Activated CD8-positive, alpha-beta T cell treated with anti-CD3 and anti-CD28 coated beads, Interleukin-2, amount 10 ng/mL, durations not matched to agents 7 days and 5 days (primary cell): ENCODE measurements at regions of chr12 and their contacts with region 1.

Region 1: DNA sequence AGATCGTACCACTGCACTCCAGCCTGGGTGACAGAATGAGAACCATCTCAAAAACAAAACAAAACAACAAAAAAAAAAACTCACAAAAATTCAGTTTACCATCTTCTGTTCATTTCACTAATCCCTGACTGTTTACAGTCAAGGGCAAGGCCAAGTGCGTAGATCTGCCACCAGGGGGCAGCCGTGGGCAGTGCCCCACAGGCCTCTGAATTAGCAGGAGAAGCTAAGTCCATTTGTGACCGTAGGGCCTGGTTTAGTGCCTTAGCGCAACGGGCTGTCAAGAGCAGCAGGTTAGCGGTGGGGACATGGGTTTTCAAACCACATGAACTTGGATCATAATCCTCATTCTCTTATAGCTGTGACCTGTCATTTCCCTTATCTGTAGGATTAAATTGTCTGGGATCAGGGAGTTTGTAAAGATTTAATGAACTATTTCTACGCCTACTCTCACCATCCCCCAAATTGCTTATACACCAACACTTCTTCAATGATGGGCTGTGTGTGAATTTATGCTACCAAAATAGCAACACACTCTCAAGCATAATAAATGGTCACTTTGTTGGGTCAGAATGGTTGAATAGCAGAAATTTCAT is 49.0 kb downstream of the KCTD10 start:
- DNase-seq: peak; percentile 83
- ATAC-seq: peak; percentile 92
- H3K4me3 Mint-ChIP-seq: no peak overlapping the region
- H3K27ac Mint-ChIP-seq: no peak overlapping the region
- H3K4me1 Mint-ChIP-seq: peaks cover 6% of the 10 kb centered on the region
- H3K27me3 Mint-ChIP-seq: peaks cover 2% of the 10 kb centered on the region

Region 2: DNA sequence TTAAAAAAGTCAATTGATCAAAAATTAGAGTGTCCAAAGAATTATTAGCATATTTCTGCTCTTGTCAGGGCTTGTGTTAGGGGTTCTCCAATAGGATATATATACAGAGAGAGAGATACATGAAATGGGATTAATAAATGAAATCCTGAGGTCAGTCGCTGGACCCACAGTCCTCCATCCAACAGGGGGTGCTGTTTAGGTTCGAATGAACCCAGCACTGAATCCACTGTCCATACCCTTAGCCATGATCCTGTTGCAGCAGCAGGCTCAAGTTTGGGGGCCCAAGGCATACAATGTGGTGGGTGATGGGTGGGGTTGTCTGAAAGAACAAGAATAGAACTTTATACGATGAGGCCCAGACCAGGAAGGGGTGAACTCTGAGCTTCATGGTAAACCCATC is 81.2 kb before region 1 on chr12:
- CTCF ChIA-PET with region 1: no interaction called
- POLR2A ChIA-PET with region 1: no interaction called
- DNase-seq: no peak
- ATAC-seq: no peak
- H3K4me3 Mint-ChIP-seq: no peak overlapping the region
- H3K27ac Mint-ChIP-seq: no peak overlapping the region
- H3K4me1 Mint-ChIP-seq: no peaks in the 10 kb centered on the region
- H3K27me3 Mint-ChIP-seq: peaks cover 22% of the 10 kb centered on the region

Region 3: GRCh38 chr12:109443794-109444193 is 15.7 kb after region 1 on chr12:
- CTCF ChIA-PET with region 1: interaction called, 18 read pairs
- POLR2A ChIA-PET with region 1: no interaction called
- DNase-seq: no peak
- ATAC-seq: no peak
- H3K4me3 Mint-ChIP-seq: no peak overlapping the region
- H3K27ac Mint-ChIP-seq: no peak overlapping the region
- H3K4me1 Mint-ChIP-seq: no peaks in the 10 kb centered on the region
- H3K27me3 Mint-ChIP-seq: no peaks in the 10 kb centered on the region

Region 4: DNA sequence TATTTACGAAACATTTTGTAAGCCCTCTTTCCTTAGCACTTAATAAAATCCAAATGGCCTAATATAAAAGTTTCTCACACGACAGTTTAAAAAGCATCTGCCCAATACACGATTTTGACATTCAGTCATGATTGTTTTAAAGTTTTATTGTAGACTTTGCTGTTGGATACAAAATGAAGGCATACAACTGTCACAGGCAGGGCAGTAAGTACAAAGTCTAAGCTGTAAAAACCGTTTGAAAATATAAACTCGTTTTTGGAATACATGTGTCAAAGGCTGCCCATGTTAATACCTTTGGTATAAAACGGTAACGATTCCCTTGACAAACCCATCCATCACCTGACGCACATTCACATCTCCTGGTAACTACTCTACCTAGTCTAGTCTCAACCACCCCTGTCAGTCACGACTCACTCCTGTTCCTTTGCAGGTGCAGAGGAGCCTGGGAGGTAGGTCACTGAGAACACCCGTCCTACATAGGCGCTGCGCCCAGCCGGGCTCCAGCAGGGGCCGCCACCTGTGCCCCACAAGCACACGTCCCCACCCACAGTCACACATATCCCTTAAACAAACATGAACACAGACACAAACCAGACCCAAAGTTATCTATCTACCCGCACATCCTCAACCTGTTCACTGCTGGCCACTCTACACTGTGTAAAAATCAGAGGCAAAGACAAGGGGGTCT is 21.9 kb after region 1 on chr12:
- CTCF ChIA-PET with region 1: interaction called, 18 read pairs
- POLR2A ChIA-PET with region 1: no interaction called
- DNase-seq: no peak
- ATAC-seq: no peak
- H3K4me3 Mint-ChIP-seq: no peak overlapping the region
- H3K27ac Mint-ChIP-seq: no peak overlapping the region
- H3K4me1 Mint-ChIP-seq: no peaks in the 10 kb centered on the region
- H3K27me3 Mint-ChIP-seq: no peaks in the 10 kb centered on the region

Region 5: GRCh38 chr12:109462710-109463692 is 34.9 kb after region 1 on chr12:
- CTCF ChIA-PET with region 1: interaction called, 23 read pairs
- POLR2A ChIA-PET with region 1: no interaction called
- DNase-seq: no peak
- ATAC-seq: peak; percentile 54
- H3K4me3 Mint-ChIP-seq: peak overlapping the region; percentile 13
- H3K27ac Mint-ChIP-seq: peak overlapping the region; percentile 83
- H3K4me1 Mint-ChIP-seq: peaks cover 39% of the 10 kb centered on the region
- H3K27me3 Mint-ChIP-seq: no peaks in the 10 kb centered on the region

Region 6: DNA sequence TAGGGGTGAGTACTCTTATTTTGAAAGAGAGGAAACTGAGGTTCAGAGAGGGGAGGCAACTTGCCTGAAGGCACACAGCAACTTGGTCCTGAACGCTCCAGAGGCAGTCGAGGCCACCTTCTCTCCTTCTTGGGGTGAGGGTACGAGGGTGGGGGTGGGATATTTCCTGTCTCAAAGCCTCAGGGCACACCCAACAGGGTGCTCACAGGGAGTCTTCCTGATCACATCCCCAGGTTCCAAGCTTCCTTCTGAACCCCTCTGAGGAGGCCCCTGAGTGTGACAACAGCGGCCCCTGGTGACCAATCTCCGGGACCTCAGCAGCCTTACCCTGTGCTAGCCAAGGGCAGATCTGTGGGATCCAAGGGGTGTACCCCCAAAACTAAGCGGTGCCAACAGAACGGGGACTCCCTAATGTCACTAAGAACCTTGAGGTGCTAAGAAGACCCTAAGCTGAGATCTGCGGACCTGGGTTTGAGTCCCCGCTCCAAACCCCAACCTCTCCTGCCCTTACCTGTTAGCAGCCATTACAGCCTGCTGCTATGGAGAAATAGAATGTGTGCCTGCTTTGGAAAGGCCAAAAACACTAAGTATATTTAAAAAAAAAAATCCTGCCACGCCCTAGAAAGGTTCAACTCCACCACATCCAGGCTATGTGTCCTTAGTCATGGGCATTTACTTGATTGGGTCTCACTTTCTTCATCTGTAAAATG is 347.2 kb after region 1 on chr12:
- CTCF ChIA-PET with region 1: interaction called, 18 read pairs
- POLR2A ChIA-PET with region 1: no interaction called
- DNase-seq: peak; percentile 81
- ATAC-seq: peak; percentile 84
- H3K4me3 Mint-ChIP-seq: no peak overlapping the region
- H3K27ac Mint-ChIP-seq: no peak overlapping the region
- H3K4me1 Mint-ChIP-seq: peaks cover 16% of the 10 kb centered on the region
- H3K27me3 Mint-ChIP-seq: no peaks in the 10 kb centered on the region